GM12878 (cell line): ENCODE measurements at regions of chr1 and their contacts with region 1.

Region 1: DNA sequence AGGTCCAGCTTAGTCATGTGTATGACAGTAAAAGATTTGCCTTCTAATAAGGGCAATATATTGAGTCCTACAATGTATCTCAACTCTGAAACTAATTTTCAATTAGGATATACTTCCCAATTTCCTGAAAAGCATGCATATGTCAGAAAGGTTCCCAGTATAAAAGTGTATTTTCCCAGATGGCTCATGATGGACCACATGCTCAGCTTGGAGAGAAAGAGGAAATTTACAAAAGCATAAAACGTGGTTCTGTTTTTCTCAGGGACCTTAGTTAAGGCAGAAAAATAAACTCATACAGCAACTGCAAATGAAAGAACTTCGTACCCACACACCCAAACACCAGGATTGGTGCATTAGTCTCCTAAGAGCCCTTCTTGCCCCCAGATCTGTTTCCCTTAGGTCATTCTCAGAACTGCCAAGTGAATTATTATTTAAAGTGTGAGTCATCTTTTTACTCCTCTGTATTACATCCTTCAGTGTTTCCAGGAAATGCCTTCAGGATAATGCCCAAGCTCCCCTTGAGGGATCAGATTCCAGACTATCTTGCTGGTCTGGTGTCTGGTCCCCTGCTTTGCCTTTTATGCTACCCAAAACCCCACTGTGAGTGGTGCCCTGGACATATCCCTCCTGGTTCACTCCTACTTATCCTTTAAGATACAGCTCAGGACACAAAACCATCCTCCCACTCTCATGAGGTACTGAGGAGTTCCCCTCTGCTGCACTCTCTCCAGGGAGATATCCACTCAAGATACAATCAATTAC is 57.4 kb downstream of the SSX2IP start:
- DNase-seq: no peak
- ATAC-seq: peak; percentile 73
- H3K4me3 ChIP-seq: no peak overlapping the region
- H3K27ac ChIP-seq: no peak overlapping the region
- H3K4me1 ChIP-seq: no peaks in the 10 kb centered on the region
- H3K27me3 ChIP-seq: no peaks in the 10 kb centered on the region
- CTCF ChIP-seq: no peak
- EP300 ChIP-seq: no peak
- POLR2A ChIP-seq: no peak
- RAD21 ChIP-seq: no peak

Region 2: DNA sequence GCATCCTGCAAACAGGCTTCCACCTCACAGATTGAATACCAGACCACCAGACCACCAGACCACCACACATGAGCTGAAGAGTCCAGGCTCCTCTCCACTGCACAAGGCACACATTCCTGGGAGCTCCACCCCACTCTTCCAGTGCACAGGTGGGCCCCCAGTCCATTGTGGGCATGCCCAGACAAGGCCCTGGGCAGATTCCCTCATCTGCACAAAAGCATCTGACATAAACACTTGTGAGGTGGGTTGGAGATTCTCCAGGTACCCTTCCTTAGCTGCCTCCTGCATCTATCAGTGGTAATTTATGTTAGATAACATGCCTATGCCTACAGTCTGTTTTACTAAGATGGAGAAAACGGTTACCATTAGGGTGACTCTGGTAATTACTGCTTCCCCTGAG is 47.1 kb before region 1 on chr1:
- CTCF ChIA-PET with region 1: no interaction called
- POLR2A ChIA-PET with region 1: no interaction called
- RAD21 ChIA-PET with region 1: no interaction called
- SMC1A ChIA-PET with region 1: no interaction called
- in situ Hi-C with region 1: loop called (anchors 5 kb)
- intact Hi-C with region 1: no loop called
- DNase-seq: no peak
- ATAC-seq: no peak
- H3K4me3 ChIP-seq: no peak overlapping the region
- H3K27ac ChIP-seq: no peak overlapping the region
- H3K4me1 ChIP-seq: peaks cover 3% of the 10 kb centered on the region
- H3K27me3 ChIP-seq: no peaks in the 10 kb centered on the region
- CTCF ChIP-seq: no peak
- EP300 ChIP-seq: no peak
- POLR2A ChIP-seq: no peak
- RAD21 ChIP-seq: no peak